ENCODE measurements at regions of chr22 and their contacts with region 1.

Region 1: GRCh38 chr22:36977947-36978660 is 41.1 kb downstream of the TST start:
- DNase-seq: peak; percentile 91
- ATAC-seq: peak; percentile 65
- H3K4me3 Mint-ChIP-seq: peak overlapping the region; percentile 77
- H3K27ac Mint-ChIP-seq: no peak overlapping the region
- H3K4me1 Mint-ChIP-seq: peaks cover 13% of the 10 kb centered on the region
- H3K27me3 Mint-ChIP-seq: peaks cover 15% of the 10 kb centered on the region
- CTCF ChIP-seq: peak; percentile 90

Region 2: DNA sequence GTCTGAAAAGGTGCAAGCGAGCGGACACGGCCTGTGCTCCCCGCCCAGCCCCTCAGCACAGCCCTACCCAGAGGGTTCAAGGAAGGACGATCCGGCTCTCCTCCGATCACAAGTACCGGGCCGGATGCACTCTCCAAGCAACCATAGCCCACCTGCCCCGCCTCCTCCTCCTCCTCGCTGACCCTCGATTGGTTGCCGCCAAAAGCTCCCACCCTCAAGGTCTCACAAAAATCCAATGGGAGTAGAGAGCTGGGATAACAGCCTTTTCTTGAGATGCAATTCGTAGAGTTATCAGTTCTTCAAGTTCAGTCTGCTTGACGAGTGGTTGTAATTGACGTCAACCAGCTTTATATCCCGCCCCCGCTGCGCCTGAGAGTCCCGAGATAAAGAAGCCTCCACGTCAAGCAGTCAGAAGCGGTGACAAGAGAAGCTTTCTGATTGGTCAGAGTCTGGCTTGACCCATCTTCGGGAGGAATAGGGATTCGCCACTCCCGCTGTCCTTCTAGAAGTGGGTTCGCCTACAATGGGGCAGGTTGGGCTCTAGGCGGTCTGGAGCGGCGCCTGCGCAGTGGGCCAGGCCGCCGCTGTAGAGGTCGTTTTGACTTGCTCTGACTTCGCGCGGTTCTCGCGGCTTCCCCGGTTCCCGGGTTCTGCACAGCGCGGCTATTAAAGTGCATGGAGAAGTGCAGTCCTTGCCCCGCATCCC is 202.0 kb before region 1 on chr22 and contains the start of gene IFT27:
- CTCF ChIA-PET with region 1: interaction called, 35 read pairs
- POLR2A ChIA-PET with region 1: interaction called, 3 read pairs
- DNase-seq: peak; percentile 97
- ATAC-seq: peak; percentile 96
- H3K4me3 Mint-ChIP-seq: peak within 1 kb of the TSS; percentile 91
- H3K27ac Mint-ChIP-seq: peak within 1 kb of the TSS; percentile 93
- H3K4me1 Mint-ChIP-seq: peaks cover 13% of the 10 kb centered on the region
- H3K27me3 Mint-ChIP-seq: peaks cover 30% of the 10 kb centered on the region
- CTCF ChIP-seq: no peak
- total RNA-seq, gene IFT27: 47.9 to 56.3 TPM (median 53.8 TPM) in 3 replicates

Region 3: GRCh38 chr22:36856121-36856791 is 121.8 kb before region 1 on chr22:
- CTCF ChIA-PET with region 1: interaction called, 66 read pairs
- POLR2A ChIA-PET with region 1: interaction called, 4 read pairs
- DNase-seq: peak; percentile 94
- ATAC-seq: peak; percentile 97
- H3K4me3 Mint-ChIP-seq: peak overlapping the region; percentile 37
- H3K27ac Mint-ChIP-seq: peak overlapping the region; percentile 20; the same call in 1 of the 2 replicates
- H3K4me1 Mint-ChIP-seq: peaks cover 9% of the 10 kb centered on the region
- H3K27me3 Mint-ChIP-seq: peaks cover 29% of the 10 kb centered on the region
- CTCF ChIP-seq: peak; percentile 100

Region 4: DNA sequence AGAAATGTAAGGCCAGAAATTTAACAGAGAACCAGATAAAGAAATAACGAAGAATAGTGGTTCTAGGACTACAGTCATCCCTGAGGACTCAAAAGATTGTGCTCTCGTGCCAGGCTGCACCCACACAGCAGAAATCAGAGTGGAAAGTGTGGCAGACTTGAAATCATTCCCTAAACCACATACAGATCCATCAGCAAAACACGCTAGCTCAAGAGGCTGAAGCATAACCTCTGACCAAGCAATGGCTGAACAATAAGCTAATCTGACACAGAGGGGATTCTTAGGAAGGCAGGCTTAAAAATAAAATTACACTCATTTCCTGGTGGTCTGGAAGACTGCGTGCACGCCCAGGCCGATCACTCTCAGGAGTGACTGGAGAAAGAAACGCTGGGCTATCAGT is 98.3 kb before region 1 on chr22:
- CTCF ChIA-PET with region 1: interaction called, 29 read pairs
- POLR2A ChIA-PET with region 1: no interaction called
- DNase-seq: no peak
- ATAC-seq: no peak
- H3K4me3 Mint-ChIP-seq: no peak overlapping the region
- H3K27ac Mint-ChIP-seq: no peak overlapping the region
- H3K4me1 Mint-ChIP-seq: peaks cover 13% of the 10 kb centered on the region
- H3K27me3 Mint-ChIP-seq: peaks cover 3% of the 10 kb centered on the region
- CTCF ChIP-seq: no peak

Region 5: DNA sequence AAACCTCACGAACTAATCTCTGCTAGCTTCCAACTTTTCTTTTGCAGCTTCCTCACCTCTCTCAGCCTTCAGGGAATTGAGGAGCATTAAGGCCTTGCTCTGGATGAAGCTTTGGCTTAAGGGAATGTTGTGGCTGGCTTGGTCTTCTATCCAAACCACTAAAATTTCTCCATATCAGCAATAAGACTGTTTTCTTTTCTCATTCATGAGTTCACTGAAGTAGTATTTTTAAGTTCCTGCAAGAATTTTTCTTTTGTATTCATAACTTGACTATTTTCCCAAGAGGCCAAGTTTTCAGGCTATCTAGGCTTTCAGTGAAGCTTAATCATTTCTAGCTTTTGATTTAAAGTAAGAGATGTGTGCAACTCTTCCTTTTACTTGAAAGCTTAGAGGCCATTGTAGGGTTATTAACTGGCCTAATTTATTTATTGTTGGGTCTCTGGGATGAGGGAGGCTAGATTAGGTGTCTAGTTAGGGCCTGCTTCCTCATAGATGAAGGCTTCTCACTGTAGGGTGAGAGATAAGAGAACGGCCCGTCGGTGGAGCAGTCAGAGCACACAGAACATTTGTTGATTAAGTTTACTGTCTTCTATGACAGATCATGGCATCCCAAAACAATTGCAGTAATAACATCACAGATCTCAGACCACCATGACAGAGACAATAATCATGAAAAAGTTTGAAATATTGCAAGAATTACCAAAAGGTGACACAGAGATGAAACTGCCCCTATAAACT is 31.5 kb before region 1 on chr22:
- CTCF ChIA-PET with region 1: interaction called, 12 read pairs
- POLR2A ChIA-PET with region 1: no interaction called
- DNase-seq: no peak
- ATAC-seq: peak; percentile 50
- H3K4me3 Mint-ChIP-seq: no peak overlapping the region
- H3K27ac Mint-ChIP-seq: no peak overlapping the region
- H3K4me1 Mint-ChIP-seq: peaks cover 8% of the 10 kb centered on the region; the same call in 1 of the 2 replicates
- H3K27me3 Mint-ChIP-seq: no peaks in the 10 kb centered on the region
- CTCF ChIP-seq: no peak

Region 6: GRCh38 chr22:36998620-36999340 is 20.7 kb after region 1 on chr22:
- CTCF ChIA-PET with region 1: interaction called, 19 read pairs
- POLR2A ChIA-PET with region 1: no interaction called
- DNase-seq: peak; percentile 46
- ATAC-seq: peak; percentile 76
- H3K4me3 Mint-ChIP-seq: no peak overlapping the region
- H3K27ac Mint-ChIP-seq: no peak overlapping the region
- H3K4me1 Mint-ChIP-seq: peaks cover 8% of the 10 kb centered on the region
- H3K27me3 Mint-ChIP-seq: peaks cover 8% of the 10 kb centered on the region
- CTCF ChIP-seq: no peak; the same call in 1 of the 2 replicates

Region 7: DNA sequence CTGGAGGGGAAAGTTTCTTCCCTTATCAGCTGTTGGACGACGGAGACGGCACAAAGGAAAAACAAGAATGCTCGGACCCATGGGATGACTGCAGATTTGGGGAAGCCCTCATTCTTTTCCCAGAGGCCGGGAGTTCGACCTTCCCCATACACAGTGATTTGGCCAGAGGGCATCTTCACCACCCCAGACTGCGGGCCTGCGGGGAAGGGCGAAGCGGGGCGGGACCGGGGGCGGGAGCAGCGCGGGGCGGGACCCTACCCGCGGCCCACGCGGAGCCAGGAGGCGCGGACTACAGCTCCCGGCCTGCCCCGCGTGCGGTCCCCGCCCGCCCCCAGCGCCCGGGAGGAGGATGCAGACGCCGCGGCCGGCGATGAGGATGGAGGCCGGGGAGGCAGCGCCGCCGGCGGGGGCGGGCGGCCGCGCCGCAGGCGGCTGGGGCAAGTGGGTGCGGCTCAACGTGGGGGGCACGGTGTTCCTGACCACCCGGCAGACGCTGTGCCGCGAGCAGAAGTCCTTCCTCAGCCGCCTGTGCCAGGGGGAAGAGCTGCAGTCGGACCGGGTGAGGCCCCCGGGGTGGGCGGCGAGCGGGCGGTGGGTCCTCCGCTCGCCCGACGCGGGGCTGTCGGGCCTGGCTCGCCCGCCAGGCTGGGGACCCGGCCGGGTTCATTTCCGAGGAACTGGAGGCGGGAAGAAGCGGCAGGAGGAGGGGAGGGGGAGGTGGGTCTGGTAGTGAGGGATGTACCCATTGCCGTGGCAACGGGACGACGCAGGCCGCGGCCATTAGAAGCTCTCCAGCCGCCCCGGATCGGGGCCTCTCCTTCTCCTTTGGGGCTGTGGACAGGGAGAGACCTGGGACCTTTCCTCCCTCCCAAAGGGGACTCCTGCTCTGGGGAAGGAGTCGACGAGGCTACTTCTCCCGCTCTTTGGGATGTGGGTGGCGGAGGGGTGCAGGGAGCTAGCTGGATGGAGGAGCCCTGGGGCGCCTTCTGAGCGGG is 73.6 kb after region 1 on chr22 and contains the start of gene KCTD17:
- CTCF ChIA-PET with region 1: interaction called, 13 read pairs
- POLR2A ChIA-PET with region 1: no interaction called
- DNase-seq: peak; percentile 60
- ATAC-seq: peak; percentile 88
- H3K4me3 Mint-ChIP-seq: peak within 1 kb of the TSS; percentile 74
- H3K27ac Mint-ChIP-seq: no peak within 1 kb of the TSS
- H3K4me1 Mint-ChIP-seq: peaks cover 9% of the 10 kb centered on the region
- H3K27me3 Mint-ChIP-seq: peaks cover 9% of the 10 kb centered on the region
- CTCF ChIP-seq: no peak
- total RNA-seq, gene KCTD17: 29.4 to 36.3 TPM (median 31.5 TPM) in 3 replicates

Measured in WTC11 (cell line).